ENCODE measurements at regions of chr1 and their contacts with region 1.

Region 1: DNA sequence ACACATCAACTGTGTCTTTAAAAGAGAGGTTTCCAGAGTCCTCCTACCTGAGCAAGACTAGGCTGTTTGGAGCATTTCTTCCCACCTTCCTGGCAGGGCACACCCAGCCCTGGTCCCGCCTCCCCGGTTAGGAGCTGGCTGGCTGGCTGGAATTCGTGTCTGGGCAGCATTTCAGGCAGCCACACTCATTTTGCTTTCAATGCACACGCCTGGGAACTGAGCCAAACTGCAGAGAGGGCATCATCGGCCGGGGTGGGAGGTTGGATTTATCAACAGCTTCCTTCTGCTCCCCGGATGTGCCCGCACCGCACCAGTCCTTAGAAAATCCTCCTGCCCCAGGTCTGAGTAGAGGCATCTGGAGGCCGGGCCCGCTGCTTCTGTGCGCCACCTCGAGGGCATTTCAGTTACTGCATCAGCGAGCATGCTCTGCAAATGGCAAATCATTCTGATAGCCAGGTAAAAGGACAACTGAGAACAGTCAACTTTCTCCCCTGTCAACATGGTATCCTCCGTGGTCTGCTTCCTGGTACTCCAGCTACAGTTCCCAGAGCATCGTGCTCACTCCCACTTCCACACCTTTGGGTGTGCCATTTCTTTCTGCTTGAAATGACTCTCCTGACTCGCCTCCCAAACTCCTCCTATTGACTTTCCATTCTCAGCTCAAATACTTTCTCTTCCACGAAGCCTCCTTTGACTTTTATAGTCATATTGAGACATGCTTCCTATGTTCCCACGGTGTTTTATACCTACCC is 20.6 kb downstream of the TCEA3 start:
- DNase-seq: peak; percentile 94

Region 2: GRCh38 chr1:23282957-23283356 is 121.0 kb before region 1 on chr1:
- intact Hi-C with region 1: loop called (anchors 5 kb)
- DNase-seq: no peak

Region 3: DNA sequence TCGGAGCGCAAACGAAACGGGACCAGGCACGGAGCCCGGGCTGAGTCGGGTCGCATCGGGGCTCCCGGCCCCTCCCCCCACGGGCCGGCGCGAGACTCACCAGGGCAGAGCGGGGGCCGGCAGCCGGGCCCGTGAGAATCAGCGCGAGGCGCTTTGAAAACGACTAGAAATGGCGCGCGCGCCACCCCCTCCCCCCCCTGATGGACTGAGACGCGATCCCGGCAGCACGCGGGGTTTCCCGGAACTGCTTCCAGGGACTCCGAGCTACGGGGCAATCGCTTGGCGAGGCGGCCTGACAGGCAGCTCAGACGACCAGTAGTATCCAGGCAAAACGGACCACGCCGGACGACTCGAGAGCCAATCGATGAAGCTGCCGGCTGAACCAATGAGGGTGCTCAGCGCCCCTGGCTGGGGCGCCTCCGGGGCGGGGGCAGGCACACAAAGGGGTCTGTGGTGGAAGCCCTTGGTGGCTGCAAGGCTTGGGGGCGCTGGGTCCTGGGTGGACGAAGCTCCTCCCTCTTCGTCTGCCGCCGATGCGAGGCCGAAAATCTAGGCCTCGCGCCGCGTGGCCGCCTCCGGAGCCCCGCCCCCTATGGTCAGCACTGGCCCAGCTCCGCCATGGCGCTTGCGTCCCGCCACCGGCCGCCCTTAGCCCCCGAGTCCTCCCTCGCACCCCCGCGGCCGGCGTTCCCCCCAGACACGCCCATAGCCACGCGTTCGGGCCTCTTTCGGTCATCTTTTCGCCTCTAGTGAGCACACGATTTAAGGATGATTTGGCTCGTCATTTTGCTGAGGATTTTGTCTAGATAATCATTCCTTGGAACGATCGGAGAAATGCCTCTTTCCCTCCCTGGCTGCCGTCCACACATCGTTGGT is 59.6 kb before region 1 on chr1 and contains the start of gene HNRNPR:
- intact Hi-C with region 1: loop called (anchors 2 kb)
- DNase-seq: peak; percentile 100
- total RNA-seq, gene HNRNPR: 67.3 TPM

Region 4: GRCh38 chr1:23530747-23531561 is 127.0 kb after region 1 on chr1 and contains the start of gene E2F2:
- intact Hi-C with region 1: no loop called
- DNase-seq: peak; percentile 93
- total RNA-seq, gene E2F2: 0.30 TPM

Measured in cardiac septum (tissue), 1 donor.